Activated CD4-positive, alpha-beta T cell treated with anti-CD3 and anti-CD28 coated beads, Interleukin-2, amount 10 ng/mL, durations not matched to agents 7 days and 5 days (primary cell): ENCODE measurements at regions of chr15 and their contacts with region 1.

Region 1: GRCh38 chr15:64893481-64894394 is 18.0 kb upstream of the ANKDD1A start:
- DNase-seq: peak; percentile 98
- H3K4me3 Mint-ChIP-seq: peak overlapping the region; percentile 78
- H3K27ac Mint-ChIP-seq: peak overlapping the region; percentile 99
- H3K4me1 Mint-ChIP-seq: peaks cover 75% of the 10 kb centered on the region
- H3K27me3 Mint-ChIP-seq: no peaks in the 10 kb centered on the region

Region 2: GRCh38 chr15:64825431-64826294 is 68.1 kb before region 1 on chr15 and contains the start of gene PIF1:
- CTCF ChIA-PET with region 1: interaction called, 12 read pairs
- POLR2A ChIA-PET with region 1: interaction called, 4 read pairs
- DNase-seq: peak; percentile 98
- H3K4me3 Mint-ChIP-seq: peak within 1 kb of the TSS; percentile 84
- H3K27ac Mint-ChIP-seq: peak within 1 kb of the TSS; percentile 93
- H3K4me1 Mint-ChIP-seq: peaks cover 40% of the 10 kb centered on the region
- H3K27me3 Mint-ChIP-seq: no peaks in the 10 kb centered on the region
- total RNA-seq, gene PIF1: 56.8 to 66.1 TPM

Region 3: DNA sequence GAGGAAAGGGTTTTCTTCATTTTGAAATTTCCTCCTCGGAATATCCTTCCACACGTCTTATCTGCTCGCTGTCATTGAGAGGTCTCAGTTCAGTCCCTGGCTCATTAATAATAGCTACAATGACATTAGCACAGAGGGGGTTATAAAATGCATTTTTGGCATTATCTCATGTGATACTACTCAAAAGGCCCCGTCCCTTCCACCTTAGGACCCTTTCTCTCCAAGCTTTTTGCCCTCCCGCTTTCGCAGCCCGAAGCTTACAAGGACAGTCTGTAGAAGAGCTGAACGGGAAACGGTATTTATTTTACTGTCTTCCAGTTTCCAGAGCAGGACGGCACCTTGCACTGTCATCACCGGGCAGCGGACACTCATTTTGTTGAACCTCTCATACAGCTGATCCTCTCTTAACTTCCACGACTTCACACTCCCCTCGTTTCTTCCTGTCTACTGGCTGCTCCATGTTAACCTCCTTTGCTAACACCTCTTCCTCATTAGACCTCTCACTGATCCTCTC is 57.7 kb before region 1 on chr15:
- CTCF ChIA-PET with region 1: interaction called, 16 read pairs
- POLR2A ChIA-PET with region 1: interaction called, 6 read pairs
- DNase-seq: no peak
- H3K4me3 Mint-ChIP-seq: peak overlapping the region; percentile 48
- H3K27ac Mint-ChIP-seq: peak overlapping the region; percentile 85
- H3K4me1 Mint-ChIP-seq: peaks cover 48% of the 10 kb centered on the region
- H3K27me3 Mint-ChIP-seq: no peaks in the 10 kb centered on the region

Region 4: DNA sequence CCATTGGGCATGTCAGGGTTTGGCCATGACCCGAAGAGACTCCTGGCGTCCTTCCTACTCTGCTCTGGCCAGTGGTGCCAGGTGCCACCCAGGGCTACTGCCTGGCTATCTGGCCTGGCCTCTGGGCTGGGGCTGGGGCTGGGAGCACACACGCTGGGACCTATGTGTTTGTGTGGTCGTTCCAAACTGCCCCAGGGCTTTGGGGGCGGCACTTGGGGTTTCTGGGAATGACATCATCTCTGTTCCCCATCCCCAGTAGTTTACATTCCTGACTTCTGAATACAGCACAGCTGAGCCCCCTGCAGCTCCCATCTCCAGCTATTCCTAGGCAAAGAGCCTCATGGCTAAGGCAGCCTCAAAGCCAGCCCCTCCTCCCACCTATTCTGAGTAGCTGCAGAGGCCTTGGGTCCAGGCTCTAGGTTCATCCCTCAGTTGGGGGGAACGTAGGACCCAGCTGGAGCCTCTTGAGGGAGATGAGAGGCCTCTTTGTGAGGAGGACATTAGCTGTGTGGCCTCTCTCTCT is 27.7 kb before region 1 on chr15:
- CTCF ChIA-PET with region 1: no interaction called
- POLR2A ChIA-PET with region 1: no interaction called
- DNase-seq: no peak
- H3K4me3 Mint-ChIP-seq: no peak overlapping the region
- H3K27ac Mint-ChIP-seq: no peak overlapping the region
- H3K4me1 Mint-ChIP-seq: peaks cover 12% of the 10 kb centered on the region
- H3K27me3 Mint-ChIP-seq: no peaks in the 10 kb centered on the region

Region 5: GRCh38 chr15:64877435-64877834 is 16.3 kb before region 1 on chr15:
- CTCF ChIA-PET with region 1: interaction called, 13 read pairs
- POLR2A ChIA-PET with region 1: interaction called, 6 read pairs
- DNase-seq: peak; percentile 17
- H3K4me3 Mint-ChIP-seq: no peak overlapping the region
- H3K27ac Mint-ChIP-seq: peak overlapping the region; percentile 66
- H3K4me1 Mint-ChIP-seq: peaks cover 37% of the 10 kb centered on the region
- H3K27me3 Mint-ChIP-seq: no peaks in the 10 kb centered on the region

Region 6: GRCh38 chr15:64883100-64883581 is 10.6 kb before region 1 on chr15:
- CTCF ChIA-PET with region 1: interaction called, 13 read pairs
- POLR2A ChIA-PET with region 1: interaction called, 3 read pairs
- DNase-seq: peak; percentile 35
- H3K4me3 Mint-ChIP-seq: no peak overlapping the region
- H3K27ac Mint-ChIP-seq: peak overlapping the region; percentile 60
- H3K4me1 Mint-ChIP-seq: peaks cover 39% of the 10 kb centered on the region
- H3K27me3 Mint-ChIP-seq: no peaks in the 10 kb centered on the region

Region 7: DNA sequence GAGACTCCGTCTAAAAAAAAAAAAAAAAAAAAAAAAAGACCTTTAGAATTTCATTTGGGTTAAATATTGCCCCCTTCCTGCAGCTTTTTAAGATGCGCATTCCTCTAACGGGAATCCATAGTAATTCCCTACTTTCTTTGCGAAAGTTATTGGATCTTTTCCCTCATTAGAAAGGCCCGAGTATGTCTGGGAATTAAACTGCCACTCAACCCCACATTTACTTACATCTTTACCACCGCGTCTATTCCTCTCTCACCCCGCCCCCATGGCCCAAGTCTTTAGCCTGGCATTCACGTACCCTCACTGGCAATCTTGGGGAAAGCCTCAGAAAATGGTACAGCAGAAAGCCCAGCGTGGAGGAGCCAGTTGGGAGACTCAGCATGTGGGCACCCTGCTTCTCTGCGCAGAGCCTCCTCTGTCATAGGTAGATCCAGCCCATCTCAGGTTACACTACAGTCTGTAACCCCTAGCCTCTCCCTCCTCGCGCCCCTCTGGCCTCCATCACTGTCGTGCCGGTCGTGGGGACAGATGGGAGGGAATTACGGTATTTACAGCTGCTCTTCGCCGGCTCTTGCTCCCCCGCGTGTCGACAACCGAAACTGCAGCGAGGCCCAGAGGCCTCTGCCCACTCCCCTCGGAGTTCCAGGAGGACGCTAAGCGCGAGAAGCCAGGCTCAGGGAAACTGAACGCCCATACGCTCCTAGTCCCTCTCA is 11.5 kb after region 1 on chr15:
- CTCF ChIA-PET with region 1: interaction called, 41 read pairs
- POLR2A ChIA-PET with region 1: no interaction called
- DNase-seq: peak; percentile 82
- H3K4me3 Mint-ChIP-seq: peak overlapping the region; percentile 44
- H3K27ac Mint-ChIP-seq: peak overlapping the region; percentile 61
- H3K4me1 Mint-ChIP-seq: peaks cover 42% of the 10 kb centered on the region
- H3K27me3 Mint-ChIP-seq: peaks cover 10% of the 10 kb centered on the region

Region 8: GRCh38 chr15:65044724-65045481 is 151.2 kb after region 1 on chr15 and contains the start of gene SLC51B:
- CTCF ChIA-PET with region 1: no interaction called
- POLR2A ChIA-PET with region 1: no interaction called
- DNase-seq: no peak
- H3K4me3 Mint-ChIP-seq: no peak within 1 kb of the TSS
- H3K27ac Mint-ChIP-seq: no peak within 1 kb of the TSS
- H3K4me1 Mint-ChIP-seq: peaks cover 10% of the 10 kb centered on the region
- H3K27me3 Mint-ChIP-seq: peaks cover 2% of the 10 kb centered on the region
- total RNA-seq, gene SLC51B: not detected